AG04449 (cell line): ENCODE measurements at regions of chr13 and their contacts with region 1.

Region 1: DNA sequence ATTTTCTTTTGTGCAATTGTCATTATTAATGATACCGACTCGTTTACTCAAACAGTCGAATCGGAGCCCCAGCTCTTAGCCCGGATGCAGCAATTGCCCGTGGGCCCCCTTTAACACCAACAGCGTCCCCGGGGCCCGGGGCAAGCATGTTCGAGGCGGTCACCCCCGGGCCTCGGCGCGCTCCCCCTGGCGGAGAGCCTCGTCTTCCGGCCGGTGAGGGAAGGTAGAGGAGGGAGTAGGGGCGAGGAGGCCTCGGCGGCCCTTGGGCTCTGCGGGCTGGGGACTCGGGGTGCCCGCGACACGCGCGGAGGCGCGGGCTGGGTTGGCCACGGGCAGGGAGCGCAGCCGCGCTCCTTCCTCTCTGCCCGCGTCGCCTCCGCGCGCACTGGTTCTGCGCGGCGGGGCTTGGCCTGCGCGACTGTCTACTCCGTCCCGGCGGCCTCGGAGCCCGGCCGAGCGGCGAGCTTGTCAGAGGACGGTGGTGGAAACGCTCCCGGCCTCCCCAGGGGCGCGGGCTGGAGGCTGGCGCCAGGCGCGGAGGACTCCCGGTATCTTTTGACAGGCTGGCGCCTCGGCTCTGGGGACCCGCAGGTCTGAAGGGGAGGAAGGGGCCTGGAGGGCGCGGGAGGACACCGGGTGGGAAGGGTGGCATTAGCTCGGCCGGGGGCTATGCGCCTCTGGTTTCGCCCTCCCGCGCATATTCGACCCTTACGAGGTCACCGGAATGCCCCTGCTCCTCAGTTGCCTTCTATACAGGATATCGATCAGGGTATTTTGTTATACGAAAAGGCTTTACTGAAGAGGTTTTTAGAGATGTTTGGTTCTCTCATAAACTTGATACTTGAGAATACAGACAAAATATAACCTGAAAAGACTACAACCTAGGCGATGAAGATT is 1.5 kb downstream of the BIVM start:
- DNase-seq: no peak
- H3K4me3 ChIP-seq: peak overlapping the region; percentile 89
- CTCF ChIP-seq: peak; percentile 94

Region 2: DNA sequence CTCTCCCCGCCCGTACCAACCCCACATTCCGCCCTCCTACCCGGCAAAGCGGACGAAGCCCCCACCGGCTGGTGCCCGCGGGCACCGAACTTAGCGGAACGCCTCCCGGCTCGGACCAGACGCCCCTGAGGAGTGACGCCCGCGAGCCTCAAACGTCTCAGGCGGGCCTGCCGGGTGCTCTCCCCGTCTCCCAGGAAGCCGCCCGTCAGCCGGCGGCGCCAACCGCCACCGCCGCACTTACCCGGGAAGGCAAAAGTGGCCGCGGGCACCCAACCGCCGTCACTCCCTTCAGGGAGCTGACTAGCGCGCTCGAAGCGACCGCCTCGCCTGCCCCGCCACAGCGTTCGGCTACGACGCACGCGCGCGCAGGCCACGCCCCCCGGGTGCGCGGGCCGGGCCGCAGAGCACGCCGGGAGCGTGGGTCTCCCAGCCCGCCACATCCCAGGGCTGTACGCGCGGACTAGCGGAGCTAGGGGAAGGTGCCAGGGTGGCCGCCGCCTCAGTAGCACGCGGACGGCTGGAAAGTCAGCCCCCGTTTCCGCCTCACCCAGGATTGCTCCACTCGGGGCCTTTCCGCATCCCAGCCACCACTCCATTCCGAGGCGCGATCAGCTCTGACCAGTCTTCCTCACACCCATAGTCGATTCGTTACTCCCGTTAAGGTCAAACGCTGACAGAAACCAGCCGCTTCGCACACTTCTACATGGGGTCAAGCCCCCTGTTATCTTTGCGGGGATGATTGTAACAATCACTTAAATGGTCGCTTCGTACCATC is 26.8 kb before region 1 on chr13 and contains the start of gene TEX30:
- CTCF ChIA-PET with region 1: interaction called, 14 read pairs
- POLR2A ChIA-PET with region 1: no interaction called
- DNase-seq: no peak
- H3K4me3 ChIP-seq: peak within 1 kb of the TSS; percentile 84
- CTCF ChIP-seq: no peak

Region 3: DNA sequence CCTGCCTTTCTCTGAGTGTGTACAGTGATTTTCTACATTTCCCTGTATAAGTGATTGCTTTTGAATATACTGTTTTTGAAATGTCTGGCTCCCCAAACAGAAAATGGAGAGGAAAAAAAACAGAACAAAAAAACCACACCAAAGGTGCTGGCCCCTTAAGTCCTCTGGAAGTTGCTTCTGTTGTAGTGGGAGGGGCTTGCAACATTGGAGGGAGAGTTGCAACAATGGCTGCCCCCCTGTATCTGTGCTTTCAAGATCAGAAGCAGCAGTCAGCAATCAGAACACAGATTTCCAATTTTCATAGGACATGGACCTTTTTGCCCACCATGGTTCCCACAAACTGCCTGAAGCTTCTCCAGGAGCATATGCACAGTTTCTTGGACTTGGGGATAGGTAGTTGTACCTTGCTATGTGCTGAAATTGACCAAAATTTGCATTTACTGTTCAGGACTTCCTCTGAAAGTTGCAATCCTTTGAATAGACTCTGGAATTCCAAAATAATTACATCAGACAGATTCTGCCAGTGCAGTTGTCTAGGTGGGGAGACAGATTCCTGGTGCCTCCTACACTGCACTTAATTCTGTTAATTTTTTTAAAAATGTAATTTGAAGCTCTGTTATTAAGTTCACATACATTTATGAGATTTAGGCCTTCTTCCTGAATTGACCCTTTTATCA is 12.4 kb after region 1 on chr13:
- CTCF ChIA-PET with region 1: interaction called, 61 read pairs
- POLR2A ChIA-PET with region 1: no interaction called
- DNase-seq: no peak
- H3K4me3 ChIP-seq: no peak overlapping the region
- CTCF ChIP-seq: no peak

Region 4: GRCh38 chr13:102825921-102826706 is 25.7 kb after region 1 on chr13:
- CTCF ChIA-PET with region 1: interaction called, 16 read pairs
- POLR2A ChIA-PET with region 1: interaction called, 5 read pairs
- DNase-seq: peak; percentile 85
- H3K4me3 ChIP-seq: peak overlapping the region; percentile 58
- CTCF ChIP-seq: no peak